ENCODE measurements at regions of chr4 and their contacts with region 1.

Region 1: DNA sequence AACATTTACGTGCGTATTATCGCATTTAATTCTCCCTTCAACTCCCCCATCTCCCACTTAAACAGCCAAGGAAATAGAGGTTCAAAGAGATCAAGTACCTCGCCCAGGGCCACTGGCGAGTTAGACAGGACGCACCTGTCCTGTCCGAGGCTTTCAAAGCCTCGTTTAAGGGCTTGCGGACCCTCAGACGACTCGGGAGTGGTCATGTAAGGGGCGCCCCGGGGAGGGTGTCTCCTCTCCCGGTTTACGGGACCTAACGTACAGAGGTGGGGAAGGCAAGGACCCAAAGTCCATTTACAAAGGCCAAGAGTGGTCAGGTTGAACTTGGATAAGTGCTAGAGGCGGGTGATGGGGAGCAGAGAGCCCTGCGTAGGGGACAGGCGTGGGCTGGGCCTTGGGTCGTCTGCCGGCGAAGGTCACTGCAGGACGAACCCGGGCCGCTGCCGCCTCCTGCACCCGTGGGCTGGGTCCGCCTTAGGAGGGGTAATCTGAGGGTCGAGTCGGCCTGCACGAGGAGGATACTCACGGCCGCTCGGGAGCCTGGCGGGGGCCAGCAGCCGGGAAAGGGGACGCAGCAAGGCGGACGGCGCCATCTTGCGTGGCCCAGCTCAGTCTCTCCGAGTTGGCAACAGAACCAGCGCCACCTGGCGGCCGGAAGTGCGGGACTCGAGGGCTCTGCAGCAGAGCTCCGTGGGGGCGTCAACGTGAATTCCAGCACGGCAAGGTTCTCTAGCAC is 5.9 kb upstream of the NAA15 start:
- DNase-seq: peak; percentile 98
- H3K4me3 ChIP-seq: peak overlapping the region; percentile 74 to 92 (median 78)
- H3K27ac ChIP-seq: peak overlapping the region; percentile 90 to 93 (median 90)
- H3K4me1 ChIP-seq: peaks cover 13 to 58% (median 35%) of the 10 kb centered on the region in 4 donors
- H3K27me3 ChIP-seq: no peaks in the 10 kb centered on the region
- CTCF ChIP-seq: peak in 6 of 7 experiments; percentile 54 to 96 (median 88)
- EP300 ChIP-seq: no peak
- POLR2A ChIP-seq: no peak

Region 2: DNA sequence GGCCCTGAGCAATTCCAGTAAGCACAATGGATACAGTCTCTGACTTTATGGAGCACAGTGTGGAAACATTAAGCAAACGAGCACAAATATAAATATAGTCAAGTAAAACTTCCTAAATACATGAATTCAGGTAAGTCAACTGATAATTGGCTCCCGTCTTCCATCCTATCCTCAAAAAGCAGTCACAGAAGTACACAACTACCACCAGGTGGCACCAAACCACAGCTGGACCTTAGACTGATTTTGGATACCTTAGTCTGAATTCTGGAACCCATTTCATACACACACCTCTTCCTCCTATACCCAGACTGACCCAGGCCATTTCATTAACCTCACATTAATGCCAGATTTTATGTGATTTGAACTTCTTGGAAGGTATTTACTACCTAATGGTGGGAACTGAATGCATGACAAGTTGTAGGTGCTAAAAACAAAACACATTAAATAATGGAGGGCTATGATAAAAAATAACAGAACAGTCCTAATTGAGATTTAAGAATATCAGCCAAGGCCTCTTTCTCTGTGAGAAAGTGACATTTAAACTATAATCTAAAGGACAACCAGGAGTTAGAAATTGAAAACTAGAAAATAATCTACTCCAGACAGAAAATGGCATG is 195.9 kb before region 1 on chr4:
- intact Hi-C with region 1: loop called (anchors 10 kb)
- DNase-seq: peak; percentile 69 to 95
- H3K4me3 ChIP-seq: no peak overlapping the region
- H3K27ac ChIP-seq: no peak overlapping the region
- H3K4me1 ChIP-seq: peaks cover 0 to 27% (median 5%) of the 10 kb centered on the region in 4 donors
- H3K27me3 ChIP-seq: no peaks in the 10 kb centered on the region
- CTCF ChIP-seq: peak in 5 of 7 experiments; percentile 72 to 85 (median 79)
- EP300 ChIP-seq: no peak
- POLR2A ChIP-seq: no peak

Region 3: DNA sequence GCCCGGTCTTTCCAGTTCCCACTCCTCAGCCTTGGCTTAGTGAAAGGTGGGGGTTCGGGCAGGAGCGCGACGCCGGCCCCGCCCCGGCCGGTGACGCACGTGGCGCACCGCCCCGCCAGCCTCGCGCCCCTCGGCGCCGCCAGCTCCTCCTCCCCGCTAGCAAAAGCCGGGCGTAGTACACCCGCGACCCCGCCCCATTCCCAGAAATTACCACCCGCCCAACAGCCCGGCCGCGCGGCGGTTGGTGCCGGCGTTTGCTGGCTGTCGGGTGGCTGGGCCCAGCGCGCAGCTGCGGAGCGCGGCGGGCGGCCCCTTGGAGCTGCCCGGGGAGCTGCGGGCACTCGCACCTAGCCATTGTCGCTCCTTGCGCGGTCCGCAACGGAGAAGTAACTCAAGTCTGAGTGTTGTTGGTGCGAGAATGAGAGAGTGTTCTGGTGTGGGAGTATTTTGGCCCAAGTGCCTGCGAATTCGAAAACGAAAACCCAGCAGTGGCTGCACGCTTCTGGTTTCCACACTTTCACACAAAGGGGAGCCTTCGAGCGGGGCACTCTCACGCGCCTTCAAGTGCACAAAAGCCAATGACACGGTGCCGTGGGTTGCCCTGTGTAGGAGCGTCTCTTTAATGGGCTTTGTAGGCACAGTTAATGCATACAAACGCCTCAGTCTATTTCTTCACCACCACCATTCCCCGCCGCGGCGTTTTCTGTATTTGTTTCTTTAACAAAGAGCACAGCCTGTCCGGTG is 117.3 kb before region 1 on chr4:
- intact Hi-C with region 1: no loop called
- DNase-seq: peak; percentile 96 to 98
- H3K4me3 ChIP-seq: peak overlapping the region; percentile 86 to 99 (median 92)
- H3K27ac ChIP-seq: peak overlapping the region; percentile 98 to 100 (median 100)
- H3K4me1 ChIP-seq: peaks cover 5 to 29% (median 21%) of the 10 kb centered on the region in 4 donors
- H3K27me3 ChIP-seq: no peaks in the 10 kb centered on the region
- CTCF ChIP-seq: no peak
- EP300 ChIP-seq: no peak
- POLR2A ChIP-seq: peak in 2 of 4 donors; percentile 19 to 88

Region 4: GRCh38 chr4:139208404-139208945 is 86.9 kb before region 1 on chr4:
- intact Hi-C with region 1: no loop called
- DNase-seq: no peak
- H3K4me3 ChIP-seq: no peak overlapping the region
- H3K27ac ChIP-seq: peak overlapping the region in 3 of 5 donors; percentile 37 to 68 (median 45)
- H3K4me1 ChIP-seq: peaks cover 0 to 7% (median 0%) of the 10 kb centered on the region in 4 donors
- H3K27me3 ChIP-seq: no peaks in the 10 kb centered on the region
- CTCF ChIP-seq: no peak
- EP300 ChIP-seq: no peak
- POLR2A ChIP-seq: no peak

Region 5: GRCh38 chr4:139229534-139230039 is 65.8 kb before region 1 on chr4:
- intact Hi-C with region 1: loop called (anchors 10 kb)
- DNase-seq: peak in 1 of 2 donors; percentile 77
- H3K4me3 ChIP-seq: no peak overlapping the region
- H3K27ac ChIP-seq: no peak overlapping the region
- H3K4me1 ChIP-seq: no peaks in the 10 kb centered on the region
- H3K27me3 ChIP-seq: no peaks in the 10 kb centered on the region
- CTCF ChIP-seq: peak in 5 of 7 experiments; percentile 58 to 83 (median 65)
- EP300 ChIP-seq: no peak
- POLR2A ChIP-seq: no peak

Measured in stomach (tissue), 19 donors.